MCF 10A (cell line): ENCODE measurements at regions of chr1 and their contacts with region 1.

Region 1: GRCh38 chr1:160354388-160354985 is 11.3 kb downstream of the NCSTN start:
- DNase-seq: peak; percentile 39
- H3K4me3 Mint-ChIP-seq: no peak overlapping the region
- H3K27ac Mint-ChIP-seq: no peak overlapping the region
- H3K4me1 Mint-ChIP-seq: no peaks in the 10 kb centered on the region
- H3K27me3 Mint-ChIP-seq: no peaks in the 10 kb centered on the region
- CTCF ChIP-seq: peak; percentile 46

Region 2: GRCh38 chr1:160328184-160328583 is 26.3 kb before region 1 on chr1:
- CTCF ChIA-PET with region 1: interaction called, 11 read pairs
- POLR2A ChIA-PET with region 1: no interaction called
- intact Hi-C with region 1: no loop called
- DNase-seq: no peak
- H3K4me3 Mint-ChIP-seq: no peak overlapping the region
- H3K27ac Mint-ChIP-seq: no peak overlapping the region
- H3K4me1 Mint-ChIP-seq: no peaks in the 10 kb centered on the region
- H3K27me3 Mint-ChIP-seq: no peaks in the 10 kb centered on the region
- CTCF ChIP-seq: no peak

Region 3: GRCh38 chr1:160410406-160411005 is 56.0 kb after region 1 on chr1:
- CTCF ChIA-PET with region 1: interaction called, 214 read pairs
- POLR2A ChIA-PET with region 1: interaction called, 3 read pairs
- intact Hi-C with region 1: no loop called
- DNase-seq: no peak
- H3K4me3 Mint-ChIP-seq: no peak overlapping the region
- H3K27ac Mint-ChIP-seq: no peak overlapping the region
- H3K4me1 Mint-ChIP-seq: peaks cover 21% of the 10 kb centered on the region
- H3K27me3 Mint-ChIP-seq: no peaks in the 10 kb centered on the region
- CTCF ChIP-seq: no peak

Region 4: GRCh38 chr1:160416369-160416768 is 61.9 kb after region 1 on chr1:
- CTCF ChIA-PET with region 1: interaction called, 214 read pairs
- POLR2A ChIA-PET with region 1: interaction called, 3 read pairs
- intact Hi-C with region 1: loop called (anchors 1 kb)
- DNase-seq: peak; percentile 77
- H3K4me3 Mint-ChIP-seq: no peak overlapping the region
- H3K27ac Mint-ChIP-seq: no peak overlapping the region
- H3K4me1 Mint-ChIP-seq: peaks cover 12% of the 10 kb centered on the region
- H3K27me3 Mint-ChIP-seq: peaks cover 11% of the 10 kb centered on the region
- CTCF ChIP-seq: peak; percentile 83